Activated CD8-positive, alpha-beta memory T cell treated with anti-CD3 and anti-CD28 coated beads, Interleukin-2, amount 10 ng/mL, durations not matched to agents 7 days and 5 days (primary cell): ENCODE measurements at regions of chr9 and their contacts with region 1.

Region 1: GRCh38 chr9:34072868-34073590 is 24.3 kb upstream of the UBAP2 start:
- DNase-seq: no peak
- ATAC-seq: no peak
- H3K4me3 Mint-ChIP-seq: no peak overlapping the region
- H3K27ac Mint-ChIP-seq: no peak overlapping the region
- H3K4me1 Mint-ChIP-seq: peaks cover 9% of the 10 kb centered on the region
- H3K27me3 Mint-ChIP-seq: no peaks in the 10 kb centered on the region

Region 2: GRCh38 chr9:33924978-33925797 is 147.8 kb before region 1 on chr9:
- CTCF ChIA-PET with region 1: interaction called, 10 read pairs
- DNase-seq: no peak
- ATAC-seq: no peak
- H3K4me3 Mint-ChIP-seq: no peak overlapping the region
- H3K27ac Mint-ChIP-seq: peak overlapping the region; percentile 5
- H3K4me1 Mint-ChIP-seq: no peaks in the 10 kb centered on the region
- H3K27me3 Mint-ChIP-seq: no peaks in the 10 kb centered on the region

Region 3: DNA sequence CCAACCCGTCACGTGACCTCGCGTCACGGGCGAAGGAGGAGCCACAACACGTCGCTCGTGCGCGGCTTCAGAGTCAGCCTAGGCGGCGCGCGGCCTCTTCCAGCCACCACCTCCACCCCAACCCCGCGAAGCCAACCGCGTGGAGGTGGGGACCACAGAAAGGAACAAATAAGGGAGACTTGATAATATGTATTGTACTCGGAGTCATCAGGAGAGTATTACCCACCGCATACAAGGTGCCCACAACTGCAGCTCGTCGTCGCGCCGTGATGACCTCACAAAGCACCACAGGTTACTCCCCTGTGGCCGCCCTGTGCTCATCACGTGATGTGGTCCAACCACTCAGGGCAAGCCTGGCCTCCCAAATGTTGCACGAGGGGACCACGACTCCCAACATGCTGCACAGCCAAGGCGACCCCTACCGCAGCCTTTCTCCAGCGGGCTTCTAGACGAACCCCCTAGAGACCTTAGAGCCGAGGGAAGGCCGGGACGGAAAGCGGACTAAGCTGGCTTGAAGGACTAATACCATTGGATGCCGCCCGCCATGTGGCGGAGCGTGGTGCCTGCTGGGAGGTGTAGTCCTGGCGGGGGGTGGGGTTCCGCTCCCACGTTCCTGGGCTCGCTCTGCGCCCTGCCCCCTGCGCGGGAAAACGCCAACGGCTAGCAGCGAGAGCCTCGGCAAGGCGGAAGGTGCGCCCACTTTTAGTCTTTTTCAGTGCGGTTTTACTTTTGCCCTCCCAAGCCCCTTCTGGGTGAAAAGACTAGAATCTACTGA is 23.9 kb before region 1 on chr9:
- CTCF ChIA-PET with region 1: interaction called, 15 read pairs
- DNase-seq: peak; percentile 98
- ATAC-seq: peak; percentile 87
- H3K4me3 Mint-ChIP-seq: peak overlapping the region; percentile 91
- H3K27ac Mint-ChIP-seq: peak overlapping the region; percentile 98
- H3K4me1 Mint-ChIP-seq: peaks cover 55% of the 10 kb centered on the region
- H3K27me3 Mint-ChIP-seq: no peaks in the 10 kb centered on the region

Region 4: DNA sequence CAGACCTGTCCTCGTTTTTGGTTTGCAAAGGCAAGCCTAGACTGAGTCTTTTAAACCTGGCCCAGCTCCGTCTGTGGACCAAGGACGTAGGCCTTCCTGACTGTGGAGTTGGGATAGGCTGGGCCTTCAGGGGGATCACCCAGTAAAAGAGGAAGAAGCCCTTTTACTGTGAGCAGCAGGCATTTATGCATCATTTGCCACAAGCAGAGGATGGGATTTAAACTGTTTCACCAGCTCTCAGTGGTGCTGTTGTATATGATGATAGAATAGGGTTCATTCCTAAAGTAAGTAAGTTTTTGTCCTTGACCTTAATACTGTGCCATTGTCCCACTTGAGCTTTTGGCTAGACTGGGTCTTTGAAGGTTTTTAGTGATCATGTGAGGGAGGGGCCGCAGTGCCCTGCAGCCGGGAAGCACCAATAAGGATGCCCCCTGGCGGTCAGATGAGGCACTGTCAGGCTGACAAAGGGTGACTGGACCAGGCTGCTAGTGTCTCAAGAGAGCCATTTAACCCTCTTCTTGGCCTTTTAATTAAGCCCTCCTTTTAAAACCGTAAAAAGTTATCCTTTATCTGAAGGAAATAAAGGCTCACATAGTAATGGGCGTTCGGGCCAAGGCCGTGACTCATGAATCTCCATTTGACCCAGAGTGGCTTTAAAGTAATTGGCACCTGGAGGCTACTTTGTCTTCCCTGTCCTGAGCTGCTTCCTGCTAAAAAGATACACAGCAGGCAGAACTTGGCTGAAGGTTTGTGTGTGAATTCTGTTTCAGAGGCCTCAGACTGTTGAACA is 179.8 kb after region 1 on chr9:
- CTCF ChIA-PET with region 1: interaction called, 29 read pairs
- DNase-seq: peak; percentile 73
- ATAC-seq: peak; percentile 80
- H3K4me3 Mint-ChIP-seq: no peak overlapping the region
- H3K27ac Mint-ChIP-seq: peak overlapping the region; percentile 57
- H3K4me1 Mint-ChIP-seq: no peaks in the 10 kb centered on the region
- H3K27me3 Mint-ChIP-seq: no peaks in the 10 kb centered on the region

Region 5: DNA sequence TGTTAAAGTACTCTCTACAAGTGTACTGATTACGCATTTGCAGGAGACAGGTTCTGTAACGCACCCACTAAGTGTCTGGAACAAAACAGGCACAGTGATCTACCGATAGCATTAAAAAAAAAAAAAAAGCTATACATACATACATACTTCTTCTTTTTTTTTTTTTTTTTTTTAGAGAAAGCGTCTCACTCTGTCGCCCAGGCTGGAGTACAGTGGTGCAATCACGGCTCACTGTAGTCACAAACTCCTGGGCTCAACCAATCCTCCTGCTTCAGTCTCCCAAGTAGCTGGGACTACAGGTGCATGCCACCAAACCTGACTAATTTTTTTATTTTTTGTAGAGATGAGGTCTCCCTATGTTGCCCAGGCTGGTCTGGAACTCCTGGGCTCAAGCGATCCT is 248.4 kb after region 1 on chr9:
- CTCF ChIA-PET with region 1: no interaction called
- DNase-seq: no peak
- ATAC-seq: no peak
- H3K4me3 Mint-ChIP-seq: no peak overlapping the region
- H3K27ac Mint-ChIP-seq: no peak overlapping the region
- H3K4me1 Mint-ChIP-seq: peaks cover 2% of the 10 kb centered on the region
- H3K27me3 Mint-ChIP-seq: no peaks in the 10 kb centered on the region